AG04450 (cell line): ENCODE measurements at regions of chr19 and their contacts with region 1.

Region 1: DNA sequence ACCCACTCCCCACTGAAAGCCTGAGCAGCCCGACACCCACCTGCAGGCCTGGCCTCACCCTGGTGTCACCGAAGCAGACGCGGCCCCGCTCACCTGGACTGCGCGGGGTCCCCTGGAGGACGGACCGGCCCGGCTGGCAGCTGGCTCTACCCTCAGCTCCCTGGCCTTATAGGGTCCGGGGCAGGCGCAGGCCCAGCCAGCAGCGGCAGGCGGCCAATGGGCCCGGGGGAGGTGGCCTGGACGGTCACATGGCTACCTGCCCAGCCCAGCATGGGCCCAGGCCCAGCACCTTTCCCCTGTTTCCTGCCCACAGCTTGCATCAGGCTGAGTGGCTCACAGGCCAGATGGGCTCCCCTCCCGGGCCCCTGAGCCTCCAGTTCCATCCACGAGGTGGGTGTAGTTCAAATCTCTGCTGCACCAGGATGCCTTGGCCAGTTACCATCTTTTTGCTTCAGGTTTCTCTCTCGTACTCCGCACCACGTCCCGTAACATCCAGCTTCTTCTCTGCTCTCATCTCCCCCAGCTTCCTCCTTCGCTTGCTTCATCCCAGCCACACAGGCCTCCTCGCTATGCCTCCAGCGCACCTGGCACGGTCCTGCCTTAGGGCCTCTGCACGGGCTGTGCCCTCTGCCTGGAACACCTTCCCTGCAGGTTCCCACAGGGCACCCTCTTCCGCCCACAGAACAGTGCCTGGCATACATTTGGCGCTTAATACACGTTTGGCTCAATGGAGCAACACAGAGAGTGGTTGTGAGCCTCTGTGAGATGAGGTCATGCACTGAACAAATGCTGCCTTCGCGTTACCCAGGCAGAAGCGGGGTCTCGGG is at the start of gene PLIN4:
- DNase-seq: no peak
- H3K4me3 ChIP-seq: no peak within 1 kb of the TSS
- H3K27ac ChIP-seq: no peak within 1 kb of the TSS
- H3K27me3 ChIP-seq: peaks cover 4% of the 10 kb centered on the region
- CTCF ChIP-seq: no peak
- polyA plus RNA-seq, gene PLIN4: 0.07 and 0.11 TPM in 2 replicates

Region 2: DNA sequence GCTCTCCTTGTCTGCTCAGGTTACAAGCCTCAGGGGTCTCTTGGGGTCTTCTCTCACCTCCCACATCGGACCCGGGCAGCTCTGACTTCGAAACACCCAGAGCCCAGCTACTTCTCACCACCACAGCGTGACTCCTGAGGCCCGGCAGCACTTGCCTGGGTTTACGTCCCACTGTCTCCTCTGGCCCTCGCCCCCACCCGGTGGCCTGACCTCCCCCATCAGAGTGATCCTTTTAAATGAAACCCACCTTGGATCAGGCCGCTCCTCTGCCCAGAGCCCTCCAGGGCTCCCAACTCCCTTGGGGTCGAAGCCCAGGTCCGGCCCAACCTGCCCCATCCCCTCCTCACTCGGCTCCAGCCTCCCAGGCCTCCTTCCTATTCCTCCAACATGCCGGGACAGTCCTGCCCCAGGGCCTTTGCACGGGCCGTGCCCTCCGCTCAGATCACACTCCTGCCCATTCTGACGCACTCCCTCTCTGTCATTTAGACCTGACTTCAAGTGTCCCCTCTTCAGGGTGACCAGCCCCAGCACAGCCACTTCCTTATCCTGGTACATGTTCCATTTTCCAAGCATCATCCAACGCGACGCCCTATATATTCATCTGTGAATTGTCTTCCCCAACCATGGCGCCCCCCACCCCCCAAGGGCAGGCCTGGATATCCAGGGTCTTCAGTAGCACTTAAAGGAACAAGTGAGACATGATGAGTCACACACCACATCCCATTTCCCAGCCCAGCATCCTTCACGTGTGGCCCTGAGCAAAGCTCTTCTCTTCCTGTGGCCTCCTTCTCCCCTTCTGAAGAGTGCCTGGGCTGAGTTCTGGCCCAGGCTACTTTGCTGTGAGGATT is 12.4 kb before region 1 on chr19:
- CTCF ChIA-PET with region 1: interaction called, 3 read pairs
- POLR2A ChIA-PET with region 1: interaction called, 11 read pairs
- DNase-seq: peak; percentile 8
- H3K4me3 ChIP-seq: no peak overlapping the region
- H3K27ac ChIP-seq: no peak overlapping the region
- H3K27me3 ChIP-seq: no peaks in the 10 kb centered on the region
- CTCF ChIP-seq: no peak